Endothelial cell of umbilical vein (primary cell): ENCODE measurements at regions of chr5 and their contacts with region 1.

Region 1: DNA sequence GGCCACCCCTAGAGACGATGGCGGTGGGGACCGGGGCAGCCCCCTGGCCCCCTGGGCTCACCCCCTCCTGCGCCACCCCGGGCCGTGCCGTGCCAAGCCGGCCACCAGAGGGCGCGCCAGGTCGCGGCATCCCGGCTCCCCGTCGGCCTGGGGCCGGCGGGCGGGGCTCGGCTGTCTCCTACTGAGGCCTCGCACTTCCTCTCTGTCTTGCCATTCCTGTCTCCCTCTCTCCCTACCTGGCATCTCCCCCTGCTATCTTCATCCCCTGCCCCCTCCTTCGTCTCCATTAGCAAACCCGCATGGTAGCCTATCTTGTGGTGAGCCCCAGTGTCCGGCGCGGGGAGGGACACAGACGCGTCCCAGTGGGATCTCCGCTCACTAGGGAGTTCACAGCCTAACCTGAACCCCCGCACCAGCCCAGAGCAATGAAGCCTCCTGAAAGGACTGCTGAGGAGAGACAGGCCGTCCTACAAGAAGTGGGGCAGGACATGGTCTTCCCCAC is 29.8 kb upstream of the FABP6 start:
- DNase-seq: peak; percentile 42
- H3K4me3 ChIP-seq: peak overlapping the region in 1 of 3 experiments; percentile 35
- H3K27ac ChIP-seq: no peak overlapping the region
- H3K4me1 ChIP-seq: peaks cover 12% of the 10 kb centered on the region
- H3K27me3 ChIP-seq: no peaks in the 10 kb centered on the region
- CTCF ChIP-seq: peak; percentile 85 to 93
- POLR2A ChIP-seq: no peak

Region 2: DNA sequence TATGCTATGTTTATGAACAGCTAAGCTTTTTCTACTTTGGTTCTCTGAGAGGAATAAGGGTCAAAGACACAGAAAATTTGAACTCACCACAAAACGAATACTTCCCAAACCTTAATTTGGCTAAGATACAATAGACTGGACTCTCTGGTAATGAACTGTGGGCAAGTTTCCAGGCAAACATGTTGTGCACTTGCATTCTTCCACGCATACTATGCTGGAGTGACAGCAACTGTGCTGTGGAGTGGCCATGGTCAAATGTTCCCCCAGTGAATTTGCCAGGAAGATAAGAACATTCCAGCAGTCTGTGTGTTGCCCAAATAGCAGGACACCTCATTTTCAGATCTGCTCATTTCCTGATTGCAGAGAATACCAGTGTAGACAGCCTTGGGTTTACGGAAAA is 593.9 kb before region 1 on chr5:
- CTCF ChIA-PET with region 1: no interaction called
- POLR2A ChIA-PET with region 1: no interaction called
- dilution Hi-C with region 1: no loop called
- intact Hi-C with region 1: no loop called
- DNase-seq: no peak
- H3K4me3 ChIP-seq: no peak overlapping the region
- H3K27ac ChIP-seq: no peak overlapping the region
- H3K4me1 ChIP-seq: no peaks in the 10 kb centered on the region
- H3K27me3 ChIP-seq: no peaks in the 10 kb centered on the region
- CTCF ChIP-seq: no peak
- POLR2A ChIP-seq: no peak

Region 3: DNA sequence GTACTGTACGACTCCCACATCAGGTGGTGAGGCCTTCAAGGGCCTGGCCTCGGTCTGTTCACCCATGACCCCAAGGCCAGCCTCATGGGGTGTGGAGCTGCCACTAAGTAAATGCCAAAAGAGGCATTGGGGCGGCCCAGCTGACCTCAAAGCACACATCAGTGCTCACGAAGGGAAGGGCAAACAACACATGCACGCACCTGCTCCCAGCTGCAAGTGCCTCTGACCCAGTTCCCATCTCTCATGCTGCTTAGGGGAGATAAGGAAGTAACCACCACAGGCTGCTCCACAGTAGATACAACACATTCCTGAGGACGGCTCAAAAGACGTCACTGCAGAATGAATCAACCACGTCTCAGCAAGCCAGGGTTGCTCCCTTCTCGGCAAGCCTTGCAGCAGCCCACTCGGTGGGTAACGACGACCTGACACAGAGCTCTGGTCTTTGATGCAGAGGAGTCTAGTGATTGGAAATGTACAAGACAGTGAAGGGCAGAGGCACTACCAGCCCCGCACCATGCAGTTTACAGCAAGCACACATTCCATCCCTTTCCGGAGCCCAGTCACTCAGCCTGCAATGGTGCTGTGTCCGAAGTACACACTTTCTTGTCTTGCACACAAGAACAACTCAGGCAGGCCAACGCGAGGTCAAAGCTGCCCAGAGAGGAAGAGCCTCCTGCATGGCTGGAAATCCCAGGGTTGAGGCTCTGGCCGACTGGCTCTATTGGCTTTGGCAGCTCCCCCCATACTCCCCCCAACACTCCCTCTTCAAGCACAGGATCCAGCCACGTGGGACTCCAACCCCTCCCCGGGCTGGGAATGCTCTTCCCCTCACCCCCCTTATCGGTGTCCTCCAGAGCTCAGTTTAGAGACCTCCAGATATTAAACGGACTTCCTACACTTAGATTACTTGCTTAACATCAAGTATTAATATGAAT is 61.7 kb after region 1 on chr5:
- CTCF ChIA-PET with region 1: no interaction called
- POLR2A ChIA-PET with region 1: no interaction called
- dilution Hi-C with region 1: no loop called
- intact Hi-C with region 1: loop called (anchors 5 kb)
- DNase-seq: peak; percentile 86
- H3K4me3 ChIP-seq: no peak overlapping the region
- H3K27ac ChIP-seq: peak overlapping the region; percentile 4
- H3K4me1 ChIP-seq: peaks cover 30% of the 10 kb centered on the region
- H3K27me3 ChIP-seq: no peaks in the 10 kb centered on the region
- CTCF ChIP-seq: no peak
- POLR2A ChIP-seq: no peak